ENCODE measurements at regions of chr18 and their contacts with region 1.

Region 1: DNA sequence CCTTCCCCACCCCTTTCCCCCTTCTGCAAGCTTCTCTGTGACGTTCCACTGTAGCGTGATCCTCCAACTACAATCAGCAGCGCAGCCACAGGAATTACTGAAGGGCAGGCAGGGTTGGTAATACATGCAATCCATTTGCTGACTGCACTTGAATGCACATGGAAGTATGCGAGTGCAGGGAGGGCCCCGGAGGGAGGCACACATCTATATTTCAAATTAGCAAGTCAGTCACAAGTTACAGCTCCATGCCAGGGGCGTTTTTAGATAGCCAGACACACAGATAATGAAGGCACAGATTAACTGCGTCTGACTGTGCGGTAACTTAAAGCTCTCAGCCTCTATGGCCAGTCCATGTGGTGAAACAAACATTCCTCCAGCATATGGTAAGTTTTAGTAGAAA is 209.2 kb upstream of the GATA6 start:
- DNase-seq: no peak
- H3K4me3 ChIP-seq: no peak overlapping the region
- H3K27ac ChIP-seq: no peak overlapping the region
- H3K4me1 ChIP-seq: no peaks in the 10 kb centered on the region
- H3K27me3 ChIP-seq: no peaks in the 10 kb centered on the region
- CTCF ChIP-seq: no peak
- POLR2A ChIP-seq: no peak

Region 2: GRCh38 chr18:21857871-21858270 is 102.3 kb before region 1 on chr18:
- intact Hi-C with region 1: no loop called
- DNase-seq: no peak
- H3K4me3 ChIP-seq: no peak overlapping the region
- H3K27ac ChIP-seq: no peak overlapping the region
- H3K4me1 ChIP-seq: no peaks in the 10 kb centered on the region
- H3K27me3 ChIP-seq: no peaks in the 10 kb centered on the region
- CTCF ChIP-seq: no peak
- POLR2A ChIP-seq: no peak

Region 3: DNA sequence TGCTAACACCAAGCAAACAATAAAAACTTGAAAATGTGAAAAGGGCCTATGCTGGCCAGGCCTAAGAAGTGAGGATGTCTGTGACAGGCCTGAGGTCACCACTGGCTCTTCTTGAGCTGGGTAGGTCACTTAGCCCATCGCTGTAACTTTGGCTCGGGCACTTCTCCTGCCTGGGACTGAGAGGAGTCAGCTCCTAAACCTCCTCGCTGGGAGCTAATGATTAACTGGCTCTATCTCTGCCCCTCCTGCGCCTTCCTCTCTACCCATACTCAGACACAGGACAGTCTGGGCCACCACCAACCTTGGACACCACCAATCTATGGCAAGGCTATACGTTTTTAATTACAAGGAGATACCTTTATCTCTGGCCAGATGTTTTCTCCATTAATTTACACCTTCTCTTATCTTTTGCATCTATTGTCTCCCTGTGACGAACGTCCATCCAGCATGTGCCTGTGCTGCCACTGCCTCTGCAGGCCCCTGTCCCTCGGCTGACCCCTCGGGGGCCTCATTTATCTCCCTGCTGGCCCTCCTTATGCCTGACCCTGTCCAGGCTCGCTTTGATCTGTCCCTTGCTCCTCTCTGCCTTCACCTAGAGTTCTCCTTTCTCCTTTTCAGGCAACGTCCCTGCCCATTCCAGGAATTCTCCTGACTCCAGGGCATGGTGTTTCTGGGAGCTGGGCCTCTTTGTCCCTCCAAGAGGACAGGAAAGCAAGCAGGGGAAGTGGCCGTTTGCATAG is 60.1 kb after region 1 on chr18:
- intact Hi-C with region 1: loop called (anchors 10 kb)
- DNase-seq: no peak
- H3K4me3 ChIP-seq: no peak overlapping the region
- H3K27ac ChIP-seq: no peak overlapping the region
- H3K4me1 ChIP-seq: no peaks in the 10 kb centered on the region
- H3K27me3 ChIP-seq: no peaks in the 10 kb centered on the region
- CTCF ChIP-seq: no peak
- POLR2A ChIP-seq: no peak